ENCODE measurements at regions of chr17 and their contacts with region 1.

Region 1: GRCh38 chr17:15257258-15257788 is 7.8 kb downstream of the PMP22 start:
- DNase-seq: peak; percentile 91

Region 2: GRCh38 chr17:15083225-15083624 is 174.1 kb before region 1 on chr17:
- in situ Hi-C with region 1: no loop called
- DNase-seq: no peak

Region 3: GRCh38 chr17:15422392-15422957 is 165.2 kb after region 1 on chr17:
- in situ Hi-C with region 1: no loop called
- DNase-seq: no peak

Region 4: GRCh38 chr17:15502369-15503112 is 245.2 kb after region 1 on chr17:
- in situ Hi-C with region 1: loop called (anchors 10 kb)
- DNase-seq: peak; percentile 86

Measured in KBM-7 (cell line).